ENCODE measurements at regions of chr12 and their contacts with region 1.

Region 1: GRCh38 chr12:107093417-107094182 is at the start of gene CRY1:
- DNase-seq: peak; percentile 98
- ATAC-seq: peak; percentile 97
- total RNA-seq, gene CRY1: 8.0 TPM

Region 2: GRCh38 chr12:106710143-106710893 is 383.3 kb before region 1 on chr12:
- intact Hi-C with region 1: no loop called
- DNase-seq: no peak
- ATAC-seq: no peak

Region 3: GRCh38 chr12:107033758-107034739 is 59.6 kb before region 1 on chr12:
- intact Hi-C with region 1: loop called (anchors 5 kb)
- DNase-seq: no peak
- ATAC-seq: no peak